ENCODE measurements at regions of chr20 and their contacts with region 1.

Region 1: DNA sequence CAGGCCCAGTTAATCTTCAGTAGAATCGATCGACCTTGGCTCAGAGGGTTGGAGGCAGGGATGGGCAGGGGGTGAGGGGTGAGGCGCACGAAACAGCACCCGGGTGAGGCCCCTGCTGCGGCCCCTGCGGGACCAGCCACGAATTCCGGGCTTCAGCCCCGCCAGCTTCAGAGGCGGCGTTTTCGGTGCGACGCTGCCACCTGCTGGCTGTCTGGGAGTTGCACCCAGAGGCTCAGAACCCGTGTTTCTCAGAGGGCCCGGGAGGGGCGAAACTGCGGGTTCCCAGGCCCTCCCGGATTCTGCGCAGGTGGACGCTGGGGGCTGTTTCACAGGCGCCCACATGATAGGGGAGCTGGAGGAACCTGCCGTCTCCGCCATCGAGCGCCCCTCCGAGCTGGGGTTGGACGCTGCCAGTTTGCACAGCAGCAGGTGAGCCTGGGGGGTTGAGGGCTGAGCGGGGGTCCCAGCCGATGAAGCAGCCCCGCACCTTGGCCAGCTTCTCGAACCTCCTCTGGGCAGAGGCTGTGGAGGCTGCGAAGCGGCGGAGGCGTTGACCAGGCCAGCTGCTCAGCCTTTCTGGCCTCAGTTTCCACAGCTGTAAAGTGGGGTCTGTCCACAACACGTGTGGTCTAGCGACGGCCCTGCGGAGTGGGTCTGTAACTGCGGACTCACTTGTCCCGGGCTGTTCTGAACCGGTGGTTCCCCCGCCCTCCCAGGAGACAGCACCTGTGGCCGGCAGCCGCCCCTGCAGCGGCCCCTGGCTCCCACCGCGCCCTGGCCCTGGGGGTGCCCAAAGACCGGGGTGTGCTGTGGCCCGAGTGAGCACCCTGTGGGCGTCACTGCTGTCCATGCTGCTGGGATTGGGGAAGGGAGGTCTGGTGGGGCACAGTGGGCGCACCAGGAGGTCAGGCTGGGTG is 2.5 kb upstream of the BHLHE23 start:
- DNase-seq: peak; percentile 74 to 91 (median 89)
- ATAC-seq: peak; percentile 78 to 86
- H3K4me3 ChIP-seq: no peak overlapping the region
- H3K27ac ChIP-seq: no peak overlapping the region
- H3K4me1 ChIP-seq: no peaks in the 10 kb centered on the region
- H3K27me3 ChIP-seq: no peaks in the 10 kb centered on the region

Region 2: DNA sequence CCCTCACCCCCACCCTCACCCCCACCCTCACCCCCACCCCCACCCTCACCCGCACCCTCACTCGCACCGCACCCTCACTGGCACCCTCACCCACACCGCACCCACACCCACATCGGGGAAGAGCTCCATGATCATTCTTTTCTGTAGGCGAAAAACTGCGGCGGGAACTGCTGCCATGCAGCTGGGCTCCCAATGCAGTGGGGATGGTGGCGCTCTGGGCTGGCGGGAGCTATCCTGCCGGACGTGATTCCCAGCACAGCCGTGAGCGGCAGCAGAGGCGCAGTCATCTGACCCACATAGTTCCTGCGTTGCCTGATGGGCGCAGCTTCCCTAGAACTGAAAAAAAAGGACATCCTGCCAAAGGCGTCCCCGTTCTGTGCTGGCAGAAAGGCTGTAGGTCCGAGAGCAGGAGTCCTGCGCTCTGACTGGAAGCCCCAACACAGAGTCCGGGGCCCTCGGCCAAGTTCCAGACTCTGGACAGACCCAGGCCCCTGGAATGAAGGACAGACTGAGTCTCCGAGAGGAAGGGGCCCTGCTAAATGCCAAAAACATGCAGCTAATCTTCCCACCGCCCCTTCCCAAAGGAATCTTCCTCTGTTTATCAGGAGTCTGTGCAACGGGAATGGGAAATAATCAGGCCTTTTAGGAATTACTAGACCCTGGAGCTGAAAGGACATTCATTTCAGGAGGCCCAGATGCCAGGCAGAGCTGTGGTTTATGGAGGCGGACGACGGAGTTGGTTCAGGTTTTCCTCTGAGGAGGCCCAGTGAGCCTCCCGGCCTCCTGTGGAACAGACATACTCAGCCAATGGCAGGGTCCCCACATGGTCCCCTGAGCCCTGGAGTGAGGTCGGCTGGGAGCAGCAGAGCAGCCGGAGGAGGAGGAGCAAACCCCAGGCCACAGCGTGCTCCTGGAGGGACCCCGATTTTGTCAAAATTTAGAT is 133.6 kb before region 1 on chr20:
- intact Hi-C with region 1: loop called (anchors 5 to 10 kb)
- DNase-seq: peak; percentile 89 to 94 (median 92)
- ATAC-seq: peak; percentile 85 to 89
- H3K4me3 ChIP-seq: no peak overlapping the region
- H3K27ac ChIP-seq: peak overlapping the region; percentile 85
- H3K4me1 ChIP-seq: peaks cover 8% of the 10 kb centered on the region
- H3K27me3 ChIP-seq: no peaks in the 10 kb centered on the region

Region 3: GRCh38 chr20:62899690-62900051 is 109.6 kb before region 1 on chr20:
- intact Hi-C with region 1: loop called in 1 of 4 experiments (anchors 5 kb)
- DNase-seq: peak in 1 of 3 donors; percentile 55
- ATAC-seq: peak; percentile 55 to 60
- H3K4me3 ChIP-seq: no peak overlapping the region
- H3K27ac ChIP-seq: no peak overlapping the region
- H3K4me1 ChIP-seq: no peaks in the 10 kb centered on the region
- H3K27me3 ChIP-seq: no peaks in the 10 kb centered on the region

Region 4: GRCh38 chr20:62972270-62973032 is 36.9 kb before region 1 on chr20:
- intact Hi-C with region 1: loop called in 1 of 4 experiments (anchors 2 kb)
- DNase-seq: peak; percentile 86 to 95 (median 94)
- ATAC-seq: peak; percentile 90 to 91
- H3K4me3 ChIP-seq: no peak overlapping the region
- H3K27ac ChIP-seq: no peak overlapping the region
- H3K4me1 ChIP-seq: no peaks in the 10 kb centered on the region
- H3K27me3 ChIP-seq: no peaks in the 10 kb centered on the region

Measured in right cardiac atrium (tissue), 5 donors.